GM10248 (cell line): ENCODE measurements at regions of chr3 and their contacts with region 1.

Region 1: GRCh38 chr3:52339612-52340011 is 23.5 kb downstream of the DNAH1 start:
- DNase-seq: peak; percentile 70
- CTCF ChIP-seq: peak; percentile 62

Region 2: GRCh38 chr3:52238761-52239701 is 100.6 kb before region 1 on chr3 and contains the start of gene TWF2:
- CTCF ChIA-PET with region 1: interaction called, 19 read pairs
- POLR2A ChIA-PET with region 1: no interaction called
- DNase-seq: peak; percentile 97
- CTCF ChIP-seq: peak; percentile 44

Region 3: DNA sequence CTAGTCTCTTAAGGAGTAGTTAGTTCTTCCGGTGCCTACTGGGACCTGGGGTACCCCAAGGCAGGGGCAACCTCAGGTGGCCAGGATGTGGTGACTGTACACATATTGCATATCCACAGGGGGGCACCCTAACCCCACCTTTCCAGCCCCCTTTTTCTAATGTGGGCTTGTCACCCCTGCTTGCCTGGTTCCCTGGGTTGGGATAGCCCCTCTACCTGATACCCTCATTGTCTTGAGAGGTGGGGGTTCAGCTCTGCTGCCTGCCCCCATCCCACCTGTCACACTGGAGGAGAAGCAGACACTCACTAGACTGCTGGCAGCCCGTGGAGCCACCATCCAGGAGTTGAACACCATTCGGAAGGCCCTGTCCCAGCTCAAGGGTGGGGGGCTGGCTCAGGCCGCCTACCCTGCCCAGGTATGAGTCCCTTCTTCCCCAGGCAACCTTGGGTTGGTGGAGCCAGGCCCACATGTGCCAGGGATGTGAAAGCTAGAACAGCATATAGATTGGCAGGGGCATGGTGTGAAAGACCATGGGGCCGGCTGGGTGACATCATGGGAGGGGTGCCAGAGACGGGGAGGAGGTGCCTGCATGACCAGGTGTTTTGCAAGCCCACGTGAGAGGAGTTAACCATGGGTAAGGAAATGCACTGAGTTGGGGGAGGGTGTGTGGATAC is 48.0 kb before region 1 on chr3:
- CTCF ChIA-PET with region 1: interaction called, 290 read pairs
- POLR2A ChIA-PET with region 1: no interaction called
- DNase-seq: peak; percentile 76
- CTCF ChIP-seq: peak; percentile 64

Region 4: DNA sequence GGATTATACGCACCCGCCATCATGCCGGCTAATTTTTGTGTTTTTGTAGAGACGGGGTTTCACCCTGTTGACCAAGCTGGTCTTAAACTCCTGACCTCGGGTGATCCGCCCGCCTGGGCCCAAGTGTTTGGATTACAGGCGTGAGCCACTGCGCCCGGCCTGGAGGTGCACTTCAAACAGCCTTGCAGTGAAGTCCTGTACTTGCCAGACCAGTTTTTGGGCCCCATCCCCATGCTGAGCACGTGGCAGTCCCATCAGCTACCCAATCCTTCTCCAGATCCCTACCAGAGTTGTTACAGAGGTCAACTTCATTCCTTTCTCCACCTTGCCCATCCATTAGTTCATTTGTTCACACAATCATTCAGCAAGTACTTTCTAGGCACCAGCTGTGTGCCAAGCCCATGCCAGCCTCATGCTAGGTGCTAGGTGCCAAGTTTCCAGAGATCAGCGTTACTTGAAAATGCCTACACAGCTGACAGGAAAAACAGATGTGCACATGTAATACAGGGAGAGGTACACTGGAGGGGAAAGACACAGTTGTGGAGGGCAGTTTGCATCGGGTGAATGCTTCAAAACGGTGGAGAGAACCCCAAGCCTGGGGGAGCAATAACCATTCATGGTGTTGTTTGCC is 21.3 kb before region 1 on chr3:
- CTCF ChIA-PET with region 1: interaction called, 10 read pairs
- POLR2A ChIA-PET with region 1: no interaction called
- DNase-seq: no peak
- CTCF ChIP-seq: no peak

Region 5: GRCh38 chr3:52355526-52356100 is 16.0 kb after region 1 on chr3:
- CTCF ChIA-PET with region 1: interaction called, 27 read pairs
- POLR2A ChIA-PET with region 1: no interaction called
- DNase-seq: no peak
- CTCF ChIP-seq: no peak